Posterior vena cava (tissue), 2 donors: ENCODE measurements at regions of chr1 and their contacts with region 1.

Region 1: DNA sequence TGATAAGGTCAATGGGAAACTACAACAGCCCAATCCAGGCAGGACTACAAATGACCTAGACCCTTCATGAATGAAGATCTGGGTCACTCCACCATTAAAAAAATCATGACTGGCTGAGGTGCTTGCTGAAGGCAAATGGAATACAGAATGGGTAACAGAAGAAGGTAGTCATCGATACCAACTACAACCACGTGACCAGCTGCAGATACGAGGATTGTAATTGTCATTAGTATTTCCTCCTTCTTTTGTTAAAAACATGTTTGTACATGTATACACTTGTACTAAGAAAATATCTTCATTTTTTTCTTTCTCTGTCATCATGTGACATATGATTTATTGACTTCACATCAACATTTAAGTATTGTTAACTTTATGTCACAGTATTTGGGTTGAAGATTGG is 444.5 kb downstream of the KCNT2 start:
- DNase-seq: no peak

Region 2: DNA sequence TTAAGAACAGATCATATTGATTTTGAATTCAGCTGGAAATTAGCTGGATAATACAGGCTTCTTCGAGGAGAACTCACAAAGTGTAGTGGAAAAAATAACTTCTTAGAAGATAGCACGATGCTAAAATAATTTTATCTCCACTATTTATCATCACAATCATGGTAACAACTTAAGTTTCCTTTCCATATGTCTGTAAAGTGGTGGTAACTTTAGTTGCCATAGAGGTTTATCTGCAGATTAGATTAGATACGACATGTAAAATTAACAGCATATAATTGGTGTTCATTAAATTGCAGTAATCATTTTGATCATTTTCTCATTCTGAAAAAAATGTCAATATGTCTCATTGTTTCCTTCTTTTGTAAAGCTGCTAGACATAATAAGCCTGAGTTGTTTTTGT is 477.0 kb before region 1 on chr1:
- intact Hi-C with region 1: no loop called
- DNase-seq: no peak

Region 3: DNA sequence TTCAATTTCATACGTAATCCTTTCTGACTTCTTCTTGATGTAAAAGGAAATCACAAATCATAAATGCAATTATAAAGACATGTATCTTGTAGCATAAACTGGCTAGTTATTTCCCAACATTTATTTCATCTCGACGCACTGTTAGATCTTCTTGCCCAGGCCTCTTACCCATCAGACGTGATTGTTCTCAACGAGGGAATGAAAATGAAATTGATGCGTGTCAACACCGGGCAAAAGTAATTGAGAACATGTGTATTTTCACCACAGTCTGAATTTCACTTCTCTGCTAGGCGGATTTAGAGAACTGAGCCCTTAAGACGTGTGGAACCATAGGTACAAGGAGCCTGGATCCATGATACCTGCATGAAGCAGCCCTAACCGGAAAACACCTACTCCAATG is 75.2 kb before region 1 on chr1:
- intact Hi-C with region 1: loop called in 1 of 2 experiments (anchors 2 kb)
- DNase-seq: no peak